ENCODE measurements at regions of chr11 and their contacts with region 1.

Region 1: DNA sequence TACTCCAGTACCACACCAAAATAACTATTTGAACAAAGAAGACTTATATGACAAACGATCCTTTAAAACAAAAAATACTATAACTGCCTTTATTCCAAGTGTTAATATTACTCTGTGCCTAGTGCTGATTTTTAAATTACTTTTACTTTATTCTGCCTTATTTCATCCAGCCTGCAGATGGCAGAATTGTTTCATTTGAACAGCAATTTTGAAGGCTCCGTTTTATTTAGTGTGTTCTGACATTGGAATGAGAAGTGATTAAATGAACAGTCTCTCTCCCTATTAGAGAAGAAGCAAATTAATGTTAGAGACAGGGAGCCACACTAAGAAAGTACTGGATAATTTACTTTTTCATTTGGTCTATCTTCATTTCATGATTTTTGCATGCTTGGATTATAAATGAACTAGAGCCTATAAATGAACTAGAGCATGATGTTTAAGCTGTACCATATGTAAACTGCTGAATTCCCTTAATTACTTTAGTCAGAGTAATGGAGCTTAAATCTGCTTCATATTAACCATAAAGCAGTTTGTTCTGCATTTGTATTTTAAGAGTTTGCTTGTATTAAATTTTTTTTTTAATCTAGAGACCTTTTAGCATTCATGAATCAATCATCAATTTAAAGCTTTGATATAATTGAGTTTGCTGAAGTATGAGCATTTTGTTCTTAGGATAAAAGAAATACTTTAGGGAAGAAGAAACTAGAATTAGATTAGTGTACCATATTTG is 9.8 kb downstream of the PDHX start:
- DNase-seq: peak; percentile 33
- ATAC-seq: peak; percentile 75
- H3K4me3 ChIP-seq: no peak overlapping the region
- H3K27ac ChIP-seq: no peak overlapping the region
- H3K4me1 ChIP-seq: 0 out of 4 replicates have a peak, but pooled peaks cover 0 to 6% of the 10 kb centered on the region in 2 experiments
- H3K27me3 ChIP-seq: no peaks in the 10 kb centered on the region
- CTCF ChIP-seq: peak; percentile 43 to 85 (median 80)
- POLR2A ChIP-seq: no peak
- RAD21 ChIP-seq: peak; percentile 91

Region 2: DNA sequence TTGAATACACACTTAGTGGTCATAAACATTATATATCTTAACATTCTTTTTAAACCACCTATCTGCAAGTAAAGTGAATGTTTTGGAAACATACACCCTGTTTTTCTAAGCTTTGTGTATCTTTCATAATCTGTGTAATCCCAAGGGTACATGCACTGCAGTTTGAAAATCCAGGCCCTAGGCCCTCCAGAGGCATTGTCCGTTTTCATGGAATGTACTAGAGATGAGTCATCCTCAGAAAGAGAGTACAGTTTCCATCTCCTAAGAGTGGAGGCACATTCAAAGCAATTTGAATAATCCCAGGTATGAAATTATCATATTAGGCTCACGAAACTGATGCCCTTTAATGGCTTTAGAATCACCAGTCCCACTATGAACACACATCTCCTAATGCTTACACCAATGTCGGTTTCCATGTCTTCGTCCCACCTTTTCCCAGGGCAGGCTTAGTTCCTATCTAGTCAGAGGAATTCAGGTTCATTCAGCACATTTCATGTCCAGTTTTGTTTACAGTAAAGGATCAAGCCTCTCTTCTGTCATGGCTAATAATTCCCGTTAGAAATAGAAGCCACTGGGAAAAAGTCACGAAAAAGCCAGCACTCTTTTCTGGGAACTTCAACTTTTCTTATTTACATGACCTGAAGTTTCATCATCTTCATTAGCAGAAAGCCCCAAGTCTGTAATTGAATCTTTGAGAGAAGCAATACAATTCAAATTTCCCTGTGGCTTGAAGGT is 173.2 kb after region 1 on chr11:
- CTCF ChIA-PET with region 1: no interaction called
- POLR2A ChIA-PET with region 1: no interaction called
- RAD21 ChIA-PET with region 1: no interaction called
- intact Hi-C with region 1: no loop called
- DNase-seq: no peak
- ATAC-seq: peak; percentile 77
- H3K4me3 ChIP-seq: no peak overlapping the region
- H3K27ac ChIP-seq: no peak overlapping the region
- H3K4me1 ChIP-seq: peaks cover 10 to 18% of the 10 kb centered on the region in 2 experiments; a peak in 3 of 4 replicates
- H3K27me3 ChIP-seq: no peaks in the 10 kb centered on the region
- CTCF ChIP-seq: no peak
- POLR2A ChIP-seq: no peak
- RAD21 ChIP-seq: no peak

Region 3: GRCh38 chr11:35165423-35166368 is 239.4 kb after region 1 on chr11:
- CTCF ChIA-PET with region 1: interaction called, 8 read pairs
- POLR2A ChIA-PET with region 1: no interaction called
- RAD21 ChIA-PET with region 1: interaction called in 1 of 2 experiments, 3 read pairs
- intact Hi-C with region 1: loop called (anchors 10 kb)
- DNase-seq: no peak
- ATAC-seq: peak; percentile 27
- H3K4me3 ChIP-seq: peak overlapping the region; percentile 2 to 29; a peak in 3 of 4 replicates
- H3K27ac ChIP-seq: peak overlapping the region; percentile 89
- H3K4me1 ChIP-seq: peaks cover 94 to 100% of the 10 kb centered on the region in 2 experiments
- H3K27me3 ChIP-seq: no peaks in the 10 kb centered on the region
- CTCF ChIP-seq: no peak
- POLR2A ChIP-seq: no peak
- RAD21 ChIP-seq: no peak

Region 4: DNA sequence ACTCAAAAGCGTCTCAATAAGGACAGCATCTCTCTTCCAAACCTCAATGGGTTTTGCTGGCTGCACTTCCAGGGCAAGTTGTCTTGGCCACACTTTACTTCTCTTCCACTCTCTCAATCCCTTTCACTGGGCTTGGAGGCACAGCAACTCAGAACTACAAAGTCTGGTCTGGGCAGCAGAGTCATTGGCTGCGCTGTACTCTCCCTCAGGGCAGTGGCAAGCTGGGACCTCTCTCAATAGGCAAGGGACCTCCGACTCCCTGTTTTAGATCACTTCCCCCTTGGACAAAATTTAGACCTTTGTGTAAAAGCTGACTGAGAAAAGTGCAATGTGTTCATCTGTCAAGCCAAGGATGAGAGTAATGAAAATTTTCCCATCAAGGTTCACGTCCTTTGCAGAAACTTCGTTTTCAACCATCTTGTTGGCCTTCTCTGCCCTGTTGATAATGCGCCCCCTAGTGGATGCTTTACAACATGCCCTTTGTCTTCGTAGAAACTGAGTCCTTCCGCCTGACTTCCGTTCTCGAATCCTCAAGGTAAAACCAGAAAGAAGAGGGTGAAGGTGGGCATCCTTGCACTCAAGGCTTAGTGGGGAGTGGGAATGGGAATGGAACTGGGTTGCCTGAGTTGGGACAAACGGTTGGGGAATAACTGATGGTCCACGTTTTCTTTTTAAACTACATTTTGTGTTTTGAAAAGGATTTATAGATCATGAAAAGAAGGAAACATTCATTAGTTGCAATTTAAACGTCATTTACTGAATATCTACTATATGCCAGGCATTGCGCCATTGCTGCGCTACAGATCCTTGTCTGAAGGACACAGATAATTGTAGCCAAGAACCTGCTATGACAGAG is 311.8 kb after region 1 on chr11:
- CTCF ChIA-PET with region 1: interaction called, 7 read pairs
- POLR2A ChIA-PET with region 1: no interaction called
- RAD21 ChIA-PET with region 1: no interaction called
- intact Hi-C with region 1: loop called (anchors 2 kb)
- DNase-seq: peak; percentile 80
- ATAC-seq: peak; percentile 75
- H3K4me3 ChIP-seq: 0 out of 4 replicates have a peak overlapping the region, but pooled peaks of 1 of the 2 experiments have one; percentile 2
- H3K27ac ChIP-seq: no peak overlapping the region
- H3K4me1 ChIP-seq: peaks cover 26 to 39% of the 10 kb centered on the region in 2 experiments
- H3K27me3 ChIP-seq: no peaks in the 10 kb centered on the region
- CTCF ChIP-seq: peak; percentile 61 to 96 (median 85); a peak in 5 of 6 replicates
- POLR2A ChIP-seq: no peak
- RAD21 ChIP-seq: peak; percentile 87

Region 5: DNA sequence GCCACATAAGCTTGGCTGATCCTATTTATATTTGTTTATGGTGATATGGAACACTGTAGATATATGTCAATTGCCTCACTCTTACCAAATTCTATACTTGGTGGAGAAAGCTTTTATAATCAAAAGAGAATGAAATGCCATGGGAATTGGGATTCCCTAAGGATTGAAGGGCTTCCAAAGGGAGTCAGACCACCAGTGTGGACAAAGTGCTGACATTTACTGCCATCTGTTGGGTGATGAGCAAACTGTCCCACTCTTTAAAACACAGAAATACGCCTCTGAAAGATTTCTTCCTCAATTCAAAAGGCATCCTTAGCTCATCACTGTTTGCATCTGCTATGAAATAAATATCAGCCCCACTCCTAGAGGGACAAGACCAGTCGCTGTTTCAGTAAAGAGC is 486.0 kb after region 1 on chr11:
- CTCF ChIA-PET with region 1: interaction called, 11 read pairs
- POLR2A ChIA-PET with region 1: no interaction called
- RAD21 ChIA-PET with region 1: no interaction called
- intact Hi-C with region 1: no loop called
- DNase-seq: no peak
- ATAC-seq: peak; percentile 76
- H3K4me3 ChIP-seq: no peak overlapping the region
- H3K27ac ChIP-seq: no peak overlapping the region
- H3K4me1 ChIP-seq: no peaks in the 10 kb centered on the region
- H3K27me3 ChIP-seq: peaks cover 32% of the 10 kb centered on the region
- CTCF ChIP-seq: peak; percentile 48 to 70 (median 61); a peak in 4 of 6 replicates
- POLR2A ChIP-seq: no peak
- RAD21 ChIP-seq: peak; percentile 73

Region 6: GRCh38 chr11:35485656-35486322 is 559.5 kb after region 1 on chr11:
- CTCF ChIA-PET with region 1: no interaction called
- POLR2A ChIA-PET with region 1: no interaction called
- RAD21 ChIA-PET with region 1: no interaction called
- intact Hi-C with region 1: loop called (anchors 5 kb)
- DNase-seq: peak; percentile 73
- ATAC-seq: peak; percentile 99
- H3K4me3 ChIP-seq: no peak overlapping the region
- H3K27ac ChIP-seq: no peak overlapping the region
- H3K4me1 ChIP-seq: peaks cover 0 to 4% of the 10 kb centered on the region in 2 experiments; a peak in 1 of 4 replicates
- H3K27me3 ChIP-seq: no peaks in the 10 kb centered on the region
- CTCF ChIP-seq: peak; percentile 71 to 93 (median 92)
- POLR2A ChIP-seq: no peak
- RAD21 ChIP-seq: peak; percentile 71

Region 7: DNA sequence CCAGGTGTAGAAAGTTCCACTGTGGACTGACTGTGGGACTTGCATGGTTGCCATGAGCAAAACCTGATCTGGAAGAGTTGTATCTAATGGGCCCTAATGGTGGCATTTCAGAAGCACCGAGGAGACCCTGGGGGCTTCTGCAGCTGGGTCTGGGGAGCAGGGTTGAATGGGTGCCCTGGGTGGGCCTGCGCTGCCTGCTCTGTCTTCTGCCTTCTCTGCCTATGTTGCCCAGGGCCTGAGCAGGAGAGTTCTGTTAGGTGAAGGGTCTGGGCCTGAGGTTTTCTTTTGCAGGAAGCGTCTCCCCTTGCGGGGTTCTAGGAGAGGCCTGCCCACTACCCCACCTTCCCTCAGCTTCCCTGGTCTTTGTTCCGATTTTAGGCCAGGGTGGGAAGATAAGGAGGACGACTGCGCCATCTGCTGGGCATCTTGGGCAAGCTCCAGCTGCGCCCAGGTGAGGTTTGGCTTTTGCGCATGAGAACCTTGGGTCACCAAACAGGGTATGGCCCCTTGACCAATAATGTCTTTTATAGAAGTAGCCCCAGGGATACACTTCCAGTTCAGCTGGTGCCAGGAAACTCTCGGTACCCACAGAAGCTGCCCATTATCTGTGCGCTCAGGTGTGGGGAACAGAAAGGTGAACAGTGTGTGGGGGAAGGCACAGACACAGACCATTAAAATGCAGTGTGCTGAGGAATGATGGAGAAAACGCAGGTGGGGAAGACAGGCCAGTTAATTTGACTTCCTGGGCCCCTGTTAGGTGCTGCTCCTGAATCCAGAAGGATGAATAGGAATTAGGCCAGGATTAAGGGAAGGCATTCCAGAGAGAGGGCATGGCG is 1339.7 kb after region 1 on chr11:
- CTCF ChIA-PET with region 1: no interaction called
- POLR2A ChIA-PET with region 1: no interaction called
- RAD21 ChIA-PET with region 1: no interaction called
- intact Hi-C with region 1: loop called (anchors 5 kb)
- DNase-seq: peak; percentile 19
- ATAC-seq: peak; percentile 96
- H3K4me3 ChIP-seq: no peak overlapping the region
- H3K27ac ChIP-seq: no peak overlapping the region
- H3K4me1 ChIP-seq: no peaks in the 10 kb centered on the region
- H3K27me3 ChIP-seq: no peaks in the 10 kb centered on the region
- CTCF ChIP-seq: peak; percentile 79 to 94 (median 82)
- POLR2A ChIP-seq: no peak
- RAD21 ChIP-seq: peak; percentile 94